Activated B cell treated with CpG ODN at 0.5 μM for 24 hours (primary cell): ENCODE measurements at regions of chr3 and their contacts with region 1.

Region 1: DNA sequence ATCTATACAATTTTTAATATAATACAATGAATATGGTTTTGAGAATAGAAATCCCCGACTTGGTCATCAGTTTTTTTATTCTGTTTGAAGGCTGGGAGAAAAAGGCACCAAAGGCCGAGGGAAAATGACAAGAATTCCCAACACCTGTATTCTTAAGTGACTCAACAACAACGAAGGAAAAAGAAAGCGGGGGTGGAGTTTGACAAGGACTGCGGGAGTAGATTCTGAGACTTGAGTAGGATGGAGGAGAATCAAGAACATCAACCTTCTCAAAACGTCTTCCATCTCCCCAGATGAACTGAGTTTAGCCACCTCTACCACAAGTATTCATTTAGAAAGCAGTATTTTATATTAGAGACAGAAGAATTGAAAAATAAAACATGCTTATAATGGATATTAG is 107.2 kb downstream of the IGSF11 start:
- DNase-seq: no peak
- ATAC-seq: no peak
- H3K4me3 Mint-ChIP-seq: no peak overlapping the region
- H3K27ac Mint-ChIP-seq: no peak overlapping the region
- H3K4me1 Mint-ChIP-seq: no peaks in the 10 kb centered on the region
- H3K27me3 Mint-ChIP-seq: peaks cover 4% of the 10 kb centered on the region
- CTCF ChIP-seq: no peak

Region 2: DNA sequence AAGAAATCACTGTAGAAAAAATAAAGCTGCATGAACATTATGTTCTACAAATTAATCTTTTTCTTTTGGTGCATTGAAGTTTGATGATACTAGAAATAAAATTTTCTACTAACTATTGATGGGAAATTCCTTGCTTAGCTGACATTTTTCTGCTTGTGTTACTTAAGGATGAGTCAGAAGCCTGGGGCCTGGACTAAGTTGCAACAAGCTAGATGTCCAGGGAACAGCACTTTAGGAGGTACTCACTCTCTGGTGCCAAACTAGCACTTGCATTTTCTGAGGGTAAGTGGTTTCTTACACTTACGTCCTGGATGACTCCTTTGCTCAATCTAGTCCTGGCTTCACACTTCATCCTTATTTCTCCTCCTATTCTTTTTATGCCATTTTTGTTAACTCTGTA is 837.9 kb before region 1 on chr3:
- CTCF ChIA-PET with region 1: no interaction called
- POLR2A ChIA-PET with region 1: no interaction called
- intact Hi-C with region 1: no loop called
- DNase-seq: no peak
- ATAC-seq: no peak
- H3K4me3 Mint-ChIP-seq: no peak overlapping the region
- H3K27ac Mint-ChIP-seq: no peak overlapping the region
- H3K4me1 Mint-ChIP-seq: no peaks in the 10 kb centered on the region
- H3K27me3 Mint-ChIP-seq: no peaks in the 10 kb centered on the region
- CTCF ChIP-seq: no peak

Region 3: DNA sequence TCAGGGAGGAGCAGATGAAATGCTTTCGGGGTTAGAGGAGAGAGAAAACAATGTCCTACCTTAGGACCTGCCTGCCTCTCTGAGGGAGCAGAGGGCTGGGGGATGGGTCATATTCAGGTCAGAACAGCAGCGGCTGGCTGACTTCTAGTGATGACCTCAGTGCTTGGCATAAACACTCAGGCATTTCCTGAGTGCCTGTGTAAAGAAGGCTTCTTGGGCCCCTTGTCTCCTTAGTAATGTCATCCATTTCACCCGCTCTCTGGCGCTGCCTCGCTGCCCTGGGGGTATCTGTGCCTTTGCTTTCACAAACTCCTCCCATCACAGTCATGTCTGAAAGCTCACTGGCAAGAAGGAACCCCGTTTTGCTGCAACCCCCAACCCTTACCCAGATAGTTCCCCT is 1249.7 kb after region 1 on chr3:
- CTCF ChIA-PET with region 1: no interaction called
- POLR2A ChIA-PET with region 1: no interaction called
- intact Hi-C with region 1: loop called (anchors 5 kb)
- DNase-seq: no peak
- ATAC-seq: no peak
- H3K4me3 Mint-ChIP-seq: no peak overlapping the region
- H3K27ac Mint-ChIP-seq: no peak overlapping the region
- H3K4me1 Mint-ChIP-seq: no peaks in the 10 kb centered on the region
- H3K27me3 Mint-ChIP-seq: no peaks in the 10 kb centered on the region
- CTCF ChIP-seq: no peak